T-cell (primary cell): ENCODE measurements at regions of chr1 and their contacts with region 1.

Region 1: DNA sequence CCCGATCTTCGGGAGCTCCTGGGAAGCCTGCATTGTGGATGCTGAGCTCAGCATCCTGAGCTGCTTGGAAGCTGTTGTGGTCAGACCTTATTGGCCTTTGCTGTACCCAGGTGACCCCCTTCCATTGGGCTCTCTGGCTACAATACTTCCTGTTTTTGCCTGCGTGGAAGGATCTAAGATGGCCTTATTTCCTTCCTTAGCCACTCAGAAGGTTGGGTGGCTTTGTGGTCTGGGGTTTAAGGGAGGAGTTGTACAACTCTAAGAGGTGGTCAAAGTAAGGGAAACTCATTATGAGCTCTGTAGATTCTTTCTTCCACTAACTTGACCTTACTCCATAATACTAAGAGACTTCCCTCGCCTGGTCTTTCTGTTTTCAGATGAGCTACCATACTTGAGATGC is 17.7 kb downstream of the PFKFB2 start:
- DNase-seq: peak in 2 of 35 experiments; percentile 19 to 23
- ATAC-seq: peak in 3 of 4 experiments; percentile 9 to 61 (median 57)
- H3K4me3 ChIP-seq: no peak overlapping the region
- H3K4me3 Mint-ChIP-seq: peak overlapping the region in 2 of 3 donors; percentile 9 to 55
- H3K27ac ChIP-seq: no peak overlapping the region
- H3K27ac Mint-ChIP-seq: peak overlapping the region; percentile 36 to 83
- H3K4me1 ChIP-seq: peaks cover 24 to 28% of the 10 kb centered on the region in 2 experiments
- H3K4me1 Mint-ChIP-seq: peaks cover 30 to 38% (median 37%) of the 10 kb centered on the region in 3 donors
- H3K27me3 ChIP-seq: no peaks in the 10 kb centered on the region
- H3K27me3 Mint-ChIP-seq: no peaks in the 10 kb centered on the region

Region 2: GRCh38 chr1:205613288-205613687 is 1457.5 kb before region 1 on chr1:
- CTCF ChIA-PET with region 1: no interaction called
- POLR2A ChIA-PET with region 1: interaction called in 1 of 2 experiments, 10 read pairs
- DNase-seq: peak in 1 of 35 experiments; percentile 23
- ATAC-seq: no peak
- H3K4me3 ChIP-seq: no peak overlapping the region
- H3K4me3 Mint-ChIP-seq: no peak overlapping the region
- H3K27ac ChIP-seq: no peak overlapping the region
- H3K27ac Mint-ChIP-seq: no peak overlapping the region
- H3K4me1 ChIP-seq: peaks cover 5 to 21% of the 10 kb centered on the region in 2 experiments
- H3K4me1 Mint-ChIP-seq: peaks cover 55 to 58% (median 56%) of the 10 kb centered on the region in 3 donors
- H3K27me3 ChIP-seq: no peaks in the 10 kb centered on the region
- H3K27me3 Mint-ChIP-seq: no peaks in the 10 kb centered on the region

Region 3: GRCh38 chr1:206878456-206878855 is 192.4 kb before region 1 on chr1:
- CTCF ChIA-PET with region 1: no interaction called
- POLR2A ChIA-PET with region 1: no interaction called
- DNase-seq: no peak
- ATAC-seq: no peak
- H3K4me3 ChIP-seq: no peak overlapping the region
- H3K4me3 Mint-ChIP-seq: no peak overlapping the region
- H3K27ac ChIP-seq: no peak overlapping the region
- H3K27ac Mint-ChIP-seq: no peak overlapping the region
- H3K4me1 ChIP-seq: no peaks in the 10 kb centered on the region
- H3K4me1 Mint-ChIP-seq: no peaks in the 10 kb centered on the region
- H3K27me3 ChIP-seq: no peaks in the 10 kb centered on the region
- H3K27me3 Mint-ChIP-seq: no peaks in the 10 kb centered on the region

Region 4: DNA sequence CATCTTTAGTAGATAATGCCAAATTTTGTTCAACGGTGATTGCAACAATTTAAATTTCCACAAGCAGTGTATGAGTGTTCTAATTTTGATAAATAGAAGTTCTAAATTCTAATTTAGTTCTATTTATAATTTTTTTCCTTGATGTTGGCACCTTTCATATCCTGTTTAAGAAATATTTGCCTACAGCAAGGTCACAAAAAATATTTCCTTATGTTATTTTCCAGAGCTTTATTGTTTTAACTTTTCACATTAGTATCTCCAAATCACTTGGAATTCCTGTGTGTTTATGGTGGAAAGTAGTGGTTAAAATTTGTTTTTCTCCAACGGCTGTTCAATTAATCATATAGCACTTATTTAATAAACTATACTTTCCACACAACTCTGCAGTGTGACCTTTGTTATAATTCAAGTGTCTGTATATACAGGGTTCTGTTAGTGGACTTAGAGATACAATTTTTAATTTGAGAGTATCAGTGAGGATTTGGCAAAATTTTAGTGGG is 156.4 kb after region 1 on chr1:
- CTCF ChIA-PET with region 1: no interaction called
- POLR2A ChIA-PET with region 1: no interaction called
- DNase-seq: no peak
- ATAC-seq: no peak
- H3K4me3 ChIP-seq: no peak overlapping the region
- H3K4me3 Mint-ChIP-seq: no peak overlapping the region
- H3K27ac ChIP-seq: no peak overlapping the region
- H3K27ac Mint-ChIP-seq: no peak overlapping the region
- H3K4me1 ChIP-seq: no peaks in the 10 kb centered on the region
- H3K4me1 Mint-ChIP-seq: no peaks in the 10 kb centered on the region
- H3K27me3 ChIP-seq: no peaks in the 10 kb centered on the region
- H3K27me3 Mint-ChIP-seq: no peaks in the 10 kb centered on the region